Dorsolateral prefrontal cortex (tissue), 120 donors: ENCODE measurements at regions of chr10 and their contacts with region 1.

Region 1: DNA sequence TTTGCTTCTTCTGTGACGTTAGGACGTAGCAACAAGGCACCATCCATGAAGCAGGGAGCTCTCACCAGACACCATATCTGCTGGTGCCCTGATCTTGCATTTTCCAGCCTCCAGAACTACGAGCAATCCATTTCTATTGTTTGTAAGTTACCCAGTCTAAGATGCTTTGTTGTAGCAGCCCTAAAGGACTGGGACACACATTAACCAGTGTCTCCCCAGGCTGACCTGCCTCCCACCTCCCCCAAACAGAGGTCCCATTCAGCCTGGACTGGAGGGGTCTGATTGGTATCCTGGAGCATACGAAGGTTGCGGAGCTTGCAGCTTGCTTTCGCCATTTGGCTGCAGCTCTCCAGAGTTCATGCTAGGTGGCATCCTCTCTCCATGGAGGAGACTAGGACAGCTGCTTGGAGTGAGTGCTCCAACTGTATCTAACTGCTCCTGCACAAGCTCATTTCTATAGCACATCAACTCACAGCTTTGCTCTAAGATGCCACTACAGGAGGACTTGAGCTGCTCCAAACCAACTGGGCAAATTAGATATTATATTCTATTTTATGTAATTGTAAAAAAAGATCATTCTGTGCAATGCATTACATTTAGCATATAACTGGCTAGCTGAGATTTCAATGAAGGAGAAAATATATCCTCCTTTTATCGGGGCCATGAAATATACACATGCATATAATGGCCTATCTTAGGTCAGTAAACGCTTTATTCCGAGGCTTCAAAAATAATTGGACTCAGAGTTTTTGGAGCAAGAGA is 8.0 kb upstream of the GRK5 start:
- DNase-seq: peak in 9 of 10 donors; percentile 59 to 79 (median 68)
- H3K4me3 ChIP-seq: peak overlapping the region in 37 of 59 donors; percentile 2 to 51 (median 32)
- H3K27ac ChIP-seq: peak overlapping the region in 2 of 59 donors; percentile 16 to 36
- H3K27me3 ChIP-seq: peaks cover 0 to 2% (median 0%) of the 10 kb centered on the region in 45 donors
- CTCF ChIP-seq: peak; percentile 26 to 94 (median 80)

Region 2: DNA sequence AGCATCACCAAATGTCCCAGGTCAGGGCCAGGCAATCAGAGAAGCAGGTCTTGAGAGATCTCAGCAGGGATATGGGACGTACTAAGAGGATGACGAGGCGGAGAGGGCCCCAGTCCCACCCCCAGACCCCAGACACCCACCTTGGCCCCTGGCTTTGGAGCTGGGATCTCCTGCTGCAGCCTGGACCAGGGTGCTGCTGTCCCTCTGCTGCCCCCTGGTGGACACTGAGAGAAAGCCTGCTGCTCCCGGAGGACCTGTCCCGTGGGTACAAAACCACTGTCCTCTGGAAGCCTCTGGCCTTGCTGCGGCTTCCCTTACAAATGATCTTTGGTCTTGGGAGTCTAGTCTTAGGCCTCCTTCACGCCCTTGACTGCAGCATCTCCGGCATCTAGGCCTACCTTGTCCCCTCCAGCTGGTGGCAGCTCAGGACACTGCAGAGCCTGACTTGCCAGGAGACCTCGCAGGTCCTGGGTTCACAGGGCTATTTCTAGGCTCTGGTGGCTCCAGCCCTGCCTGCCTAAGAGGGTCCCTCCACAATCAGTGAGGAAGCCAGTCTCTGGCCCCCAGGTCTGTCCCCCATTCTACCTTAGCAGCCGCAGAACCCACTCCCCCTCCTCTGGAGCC is 246.0 kb after region 1 on chr10:
- intact Hi-C with region 1: loop called in 1 of 2 experiments (anchors 2 kb)
- DNase-seq: peak; percentile 81 to 89 (median 86)
- H3K4me3 ChIP-seq: no peak overlapping the region
- H3K27ac ChIP-seq: no peak overlapping the region
- H3K27me3 ChIP-seq: no peaks in the 10 kb centered on the region
- CTCF ChIP-seq: peak; percentile 86 to 99 (median 95)